Activated CD4-positive, alpha-beta T cell treated with anti-CD3 and anti-CD28 coated beads for 36 hours (primary cell): ENCODE measurements at regions of chr5 and their contacts with region 1.

Region 1: GRCh38 chr5:151447174-151448037 is at the start of gene SLC36A1:
- DNase-seq: peak; percentile 98
- ATAC-seq: peak; percentile 94
- H3K4me3 Mint-ChIP-seq: peak within 1 kb of the TSS; percentile 93
- H3K27ac Mint-ChIP-seq: peak within 1 kb of the TSS; percentile 88
- H3K4me1 Mint-ChIP-seq: peaks cover 22% of the 10 kb centered on the region
- H3K27me3 Mint-ChIP-seq: peaks cover 12% of the 10 kb centered on the region
- total RNA-seq, gene SLC36A1: 3.4 to 4.4 TPM

Region 2: GRCh38 chr5:151432210-151432609 is 15.2 kb before region 1 on chr5:
- CTCF ChIA-PET with region 1: interaction called, 12 read pairs
- POLR2A ChIA-PET with region 1: no interaction called
- intact Hi-C with region 1: no loop called
- DNase-seq: no peak
- ATAC-seq: no peak
- H3K4me3 Mint-ChIP-seq: no peak overlapping the region
- H3K27ac Mint-ChIP-seq: no peak overlapping the region
- H3K4me1 Mint-ChIP-seq: no peaks in the 10 kb centered on the region
- H3K27me3 Mint-ChIP-seq: peaks cover 4% of the 10 kb centered on the region

Region 3: DNA sequence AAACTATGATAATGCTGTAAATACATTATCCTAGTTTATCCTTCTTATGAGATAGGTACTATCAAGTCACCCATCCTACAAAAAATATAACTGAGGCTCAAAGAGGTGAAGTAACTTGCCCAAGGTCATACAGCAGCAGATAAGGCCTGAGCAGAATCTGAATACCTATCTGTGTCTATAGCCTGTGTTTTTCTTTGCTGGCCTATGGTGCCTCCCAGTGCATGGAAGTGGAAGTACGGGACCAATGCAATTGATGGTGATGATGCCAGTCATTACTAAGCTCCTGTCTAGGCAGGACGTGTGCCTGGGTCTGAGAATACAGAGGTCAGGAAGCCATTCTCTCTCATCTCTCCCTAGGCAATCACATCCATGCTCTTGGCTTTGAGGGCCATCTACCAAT is 75.9 kb after region 1 on chr5:
- CTCF ChIA-PET with region 1: interaction called, 9 read pairs
- POLR2A ChIA-PET with region 1: no interaction called
- intact Hi-C with region 1: loop called (anchors 1 kb)
- DNase-seq: peak; percentile 67
- ATAC-seq: peak; percentile 98
- H3K4me3 Mint-ChIP-seq: no peak overlapping the region
- H3K27ac Mint-ChIP-seq: no peak overlapping the region
- H3K4me1 Mint-ChIP-seq: peaks cover 3% of the 10 kb centered on the region
- H3K27me3 Mint-ChIP-seq: no peaks in the 10 kb centered on the region

Region 4: DNA sequence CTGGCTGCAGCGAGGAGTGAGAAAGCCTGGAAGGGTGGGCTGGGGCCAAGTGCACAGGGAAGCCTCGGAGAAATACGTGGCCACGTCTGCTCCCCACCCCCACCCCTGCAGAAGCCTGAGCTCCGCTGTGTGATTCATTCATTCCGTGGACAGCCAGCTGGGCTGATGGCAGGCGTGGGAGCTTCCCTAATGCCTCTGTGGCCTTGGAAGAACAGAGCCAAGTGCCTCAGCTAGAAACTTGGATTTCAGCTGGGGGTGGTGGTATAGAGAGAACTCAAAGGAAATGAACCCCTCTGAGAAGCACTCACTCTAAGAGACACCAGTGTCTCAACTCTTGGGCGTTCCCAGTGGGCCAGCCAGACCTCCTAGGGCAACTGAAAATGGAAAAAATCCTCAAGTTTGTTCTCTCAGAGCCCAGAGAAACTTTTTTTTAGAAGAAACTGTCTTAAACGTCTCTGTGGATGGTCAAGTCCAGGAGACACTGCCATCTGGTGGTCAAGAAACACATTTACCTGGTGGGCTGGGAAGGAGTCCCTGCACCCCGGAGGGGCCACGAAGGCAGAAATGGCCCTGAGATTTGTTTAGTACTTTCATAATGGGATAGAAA is 293.0 kb after region 1 on chr5:
- CTCF ChIA-PET with region 1: interaction called, 3 read pairs
- POLR2A ChIA-PET with region 1: no interaction called
- intact Hi-C with region 1: loop called in 1 of 2 experiments (anchors 1 kb)
- DNase-seq: peak; percentile 65
- ATAC-seq: peak; percentile 72
- H3K4me3 Mint-ChIP-seq: no peak overlapping the region
- H3K27ac Mint-ChIP-seq: no peak overlapping the region
- H3K4me1 Mint-ChIP-seq: peaks cover 14% of the 10 kb centered on the region
- H3K27me3 Mint-ChIP-seq: no peaks in the 10 kb centered on the region